ENCODE measurements at regions of chr15 and their contacts with region 1.

Region 1: DNA sequence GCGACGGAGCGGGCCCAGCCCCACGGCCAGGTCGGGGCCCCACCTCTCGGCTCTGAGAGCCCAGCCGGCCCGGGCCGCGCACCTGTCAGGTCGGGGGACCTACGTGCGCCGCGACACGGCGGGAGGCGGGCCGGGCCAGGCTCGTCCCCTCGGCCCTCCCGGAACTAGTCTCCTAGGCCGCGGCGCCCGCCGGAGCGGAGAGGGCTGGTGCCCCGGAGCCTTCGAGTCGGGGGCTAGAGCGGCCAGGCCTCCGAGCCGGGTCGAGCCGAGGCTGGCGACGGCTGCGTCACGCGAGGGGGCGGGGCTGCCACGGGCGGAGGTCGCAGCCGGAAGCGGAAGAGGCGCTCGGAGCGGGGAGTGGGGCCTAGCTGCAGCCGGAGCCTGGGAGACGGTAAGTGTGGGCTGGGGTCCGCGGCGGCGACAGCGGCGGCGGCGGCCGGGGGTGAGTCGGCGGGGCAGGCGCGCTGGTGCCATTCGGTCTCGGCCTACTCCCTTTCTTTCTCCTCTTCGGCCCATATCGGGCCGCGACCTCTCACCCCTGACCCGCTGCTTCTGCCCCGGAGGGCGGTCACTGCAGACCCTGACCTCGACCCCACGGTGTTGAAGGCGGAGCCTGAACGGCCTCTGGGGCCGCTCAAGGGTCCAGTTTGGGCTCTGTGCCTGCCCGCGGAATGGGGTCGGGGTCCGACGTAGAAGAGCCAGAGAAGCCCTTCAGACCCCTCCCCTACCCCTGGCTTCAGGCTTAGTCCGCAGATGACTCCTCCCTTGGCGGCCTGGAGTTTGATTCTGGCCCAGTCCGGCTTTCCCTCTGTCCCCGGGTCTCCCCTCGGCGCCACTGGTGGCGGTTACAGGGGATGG is at the start of gene CLK3:
- DNase-seq: peak; percentile 91 to 97 (median 96)
- ATAC-seq: peak; percentile 75 to 78
- H3K4me3 Mint-ChIP-seq: peak within 1 kb of the TSS; percentile 87 to 97 (median 92)
- H3K27ac Mint-ChIP-seq: peak within 1 kb of the TSS; percentile 87 to 99 (median 97)
- H3K4me1 Mint-ChIP-seq: peaks cover 22 to 46% (median 42%) of the 10 kb centered on the region in 4 donors
- H3K27me3 Mint-ChIP-seq: no peaks in the 10 kb centered on the region
- polyA plus RNA-seq, gene CLK3: 49.0 to 92.8 (median 55.1) TPM

Region 2: DNA sequence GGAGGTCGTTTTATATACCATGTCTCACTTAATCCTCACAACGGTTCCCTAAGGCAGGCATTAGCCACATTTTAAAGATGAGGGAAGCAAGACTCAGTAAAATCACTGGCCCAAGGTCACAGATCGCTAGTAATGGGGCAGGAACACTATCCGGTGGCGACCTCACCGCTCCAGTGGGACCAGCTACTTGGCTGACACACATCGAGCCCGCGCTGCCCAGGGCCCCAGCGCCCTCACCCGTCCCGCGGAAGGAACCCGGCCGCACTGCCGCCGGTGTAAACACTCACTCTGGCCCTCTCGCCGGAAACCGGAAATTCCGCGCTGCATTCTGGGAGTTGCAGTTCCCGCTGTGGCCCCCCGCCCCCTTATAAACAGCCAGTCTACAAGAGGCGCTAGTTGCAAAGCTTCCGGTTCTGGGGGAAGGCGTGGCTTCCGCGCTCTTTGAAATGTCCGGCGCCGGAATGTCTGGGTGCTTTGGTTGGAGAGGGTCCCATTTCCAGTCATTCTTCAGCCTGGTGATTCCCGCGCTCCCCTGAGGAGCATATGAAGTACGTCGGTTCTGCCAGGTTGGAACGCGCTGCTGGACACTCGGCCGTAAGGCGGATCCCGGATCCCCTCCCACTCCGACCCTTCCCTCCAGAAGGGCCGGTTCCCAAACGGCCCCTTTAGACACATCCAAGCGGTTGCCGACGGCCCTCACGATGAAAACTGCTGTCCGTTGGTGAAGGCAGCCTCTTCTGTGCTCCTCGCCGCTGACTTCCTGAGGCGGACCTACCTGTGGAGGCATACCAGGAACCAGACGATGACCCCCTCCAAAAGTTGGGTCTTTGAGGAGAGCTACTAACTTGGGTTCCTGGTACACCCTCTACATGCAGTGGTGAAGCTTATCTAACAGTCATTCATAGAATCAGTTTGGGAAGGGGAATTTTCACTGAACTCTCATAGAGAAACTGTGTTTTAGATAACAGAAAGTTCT is 154.6 kb before region 1 on chr15 and contains the start of gene UBL7:
- POLR2A ChIA-PET with region 1: interaction called, 16 read pairs
- DNase-seq: peak; percentile 89 to 97 (median 92)
- ATAC-seq: peak; percentile 98
- H3K4me3 Mint-ChIP-seq: peak within 1 kb of the TSS; percentile 87 to 96 (median 94)
- H3K27ac Mint-ChIP-seq: peak within 1 kb of the TSS; percentile 62 to 97 (median 93)
- H3K4me1 Mint-ChIP-seq: peaks cover 31 to 59% (median 56%) of the 10 kb centered on the region in 4 donors
- H3K27me3 Mint-ChIP-seq: no peaks in the 10 kb centered on the region
- polyA plus RNA-seq, gene UBL7: 113 to 151 (median 150) TPM

Region 3: GRCh38 chr15:74540761-74541493 is 74.8 kb before region 1 on chr15 and contains the start of gene ARID3B:
- POLR2A ChIA-PET with region 1: interaction called, 51 read pairs
- DNase-seq: peak; percentile 86 to 98 (median 92)
- ATAC-seq: peak; percentile 87 to 89
- H3K4me3 Mint-ChIP-seq: peak within 1 kb of the TSS; percentile 89 to 99 (median 97)
- H3K27ac Mint-ChIP-seq: peak within 1 kb of the TSS; percentile 90 to 99 (median 97)
- H3K4me1 Mint-ChIP-seq: peaks cover 37 to 59% (median 57%) of the 10 kb centered on the region in 4 donors
- H3K27me3 Mint-ChIP-seq: no peaks in the 10 kb centered on the region
- polyA plus RNA-seq, gene ARID3B: 4.0 to 13.2 (median 7.5) TPM

Region 4: DNA sequence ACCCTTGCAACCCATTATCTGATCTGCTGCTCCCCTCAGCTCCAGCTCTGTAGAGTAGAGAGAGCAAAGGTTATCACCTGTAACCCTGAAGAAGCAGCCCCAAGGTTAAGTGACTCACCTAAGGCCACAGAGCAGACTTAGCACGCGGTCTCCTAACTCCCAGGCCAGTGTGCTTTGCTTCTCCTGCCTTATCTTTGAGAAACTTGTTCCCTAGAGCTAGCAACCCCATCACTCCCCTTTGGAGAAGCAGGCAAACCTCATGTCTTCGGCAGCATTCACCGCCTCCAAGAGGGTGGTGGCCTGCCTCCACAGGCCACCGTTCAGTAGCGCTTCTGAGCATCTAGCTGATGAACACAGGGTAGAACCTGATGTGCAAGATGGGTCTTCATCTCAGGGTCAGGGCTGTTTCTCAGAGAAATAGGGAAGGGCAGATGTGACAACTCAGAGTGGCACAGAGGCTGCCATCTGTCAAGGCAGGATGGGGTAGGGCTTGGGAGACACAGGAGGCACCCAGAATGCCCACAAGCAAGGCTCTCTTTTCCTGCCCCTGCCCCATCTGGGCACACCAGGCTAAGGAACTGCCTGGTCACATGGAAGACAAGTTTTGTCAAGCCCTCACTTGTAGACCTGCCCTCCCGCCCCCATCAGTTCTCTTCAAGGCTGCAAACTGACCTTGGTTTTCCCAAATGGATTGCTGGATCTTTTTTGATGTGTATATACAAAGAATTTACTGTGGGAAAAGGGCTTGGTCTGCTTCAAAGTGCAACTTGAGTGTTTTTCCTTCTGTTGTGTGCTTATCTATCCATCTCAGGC is 35.0 kb before region 1 on chr15:
- POLR2A ChIA-PET with region 1: no interaction called
- DNase-seq: no peak
- ATAC-seq: no peak
- H3K4me3 Mint-ChIP-seq: no peak overlapping the region
- H3K27ac Mint-ChIP-seq: peak overlapping the region in 3 of 10 donors; percentile 24 to 75 (median 69)
- H3K4me1 Mint-ChIP-seq: peaks cover 0 to 6% (median 3%) of the 10 kb centered on the region in 4 donors
- H3K27me3 Mint-ChIP-seq: no peaks in the 10 kb centered on the region

Region 5: GRCh38 chr15:74598126-74598842 is 17.5 kb before region 1 on chr15:
- POLR2A ChIA-PET with region 1: interaction called, 42 read pairs
- DNase-seq: peak; percentile 77 to 92 (median 80)
- ATAC-seq: peak; percentile 97 to 98
- H3K4me3 Mint-ChIP-seq: peak overlapping the region; percentile 91 to 100 (median 100)
- H3K27ac Mint-ChIP-seq: peak overlapping the region; percentile 95 to 99 (median 98)
- H3K4me1 Mint-ChIP-seq: peaks cover 15 to 27% (median 21%) of the 10 kb centered on the region in 4 donors
- H3K27me3 Mint-ChIP-seq: no peaks in the 10 kb centered on the region

Region 6: DNA sequence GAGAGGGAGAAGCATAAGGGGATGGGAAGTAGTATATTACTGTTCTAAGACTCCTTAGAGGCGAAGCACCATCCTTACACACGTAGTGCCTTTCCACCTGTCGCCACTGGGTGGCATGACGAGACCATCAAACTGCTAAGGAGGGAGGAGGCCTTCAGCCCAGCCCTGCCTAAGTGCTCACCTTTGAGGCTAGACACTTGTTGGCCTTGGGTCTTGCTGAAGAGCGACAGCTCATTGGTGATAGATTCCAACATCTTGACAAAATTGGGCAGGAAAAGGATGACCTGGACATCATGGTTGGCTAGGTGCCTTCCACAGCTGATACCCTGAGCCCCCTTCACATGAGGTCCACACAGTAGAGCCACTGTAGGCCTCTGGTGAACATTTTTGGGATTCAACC is 19.5 kb after region 1 on chr15:
- POLR2A ChIA-PET with region 1: interaction called, 193 read pairs
- DNase-seq: peak; percentile 50 to 85 (median 66)
- ATAC-seq: peak; percentile 84 to 92
- H3K4me3 Mint-ChIP-seq: no peak overlapping the region
- H3K27ac Mint-ChIP-seq: peak overlapping the region in 3 of 10 donors; percentile 0 to 75 (median 55)
- H3K4me1 Mint-ChIP-seq: peaks cover 7 to 13% (median 9%) of the 10 kb centered on the region in 4 donors
- H3K27me3 Mint-ChIP-seq: no peaks in the 10 kb centered on the region

Measured in naive thymus-derived CD8-positive, alpha-beta T cell (primary cell).